Activated B cell treated with CpG ODN at 0.5 μM for 24 hours (primary cell): ENCODE measurements at regions of chr3 and their contacts with region 1.

Region 1: DNA sequence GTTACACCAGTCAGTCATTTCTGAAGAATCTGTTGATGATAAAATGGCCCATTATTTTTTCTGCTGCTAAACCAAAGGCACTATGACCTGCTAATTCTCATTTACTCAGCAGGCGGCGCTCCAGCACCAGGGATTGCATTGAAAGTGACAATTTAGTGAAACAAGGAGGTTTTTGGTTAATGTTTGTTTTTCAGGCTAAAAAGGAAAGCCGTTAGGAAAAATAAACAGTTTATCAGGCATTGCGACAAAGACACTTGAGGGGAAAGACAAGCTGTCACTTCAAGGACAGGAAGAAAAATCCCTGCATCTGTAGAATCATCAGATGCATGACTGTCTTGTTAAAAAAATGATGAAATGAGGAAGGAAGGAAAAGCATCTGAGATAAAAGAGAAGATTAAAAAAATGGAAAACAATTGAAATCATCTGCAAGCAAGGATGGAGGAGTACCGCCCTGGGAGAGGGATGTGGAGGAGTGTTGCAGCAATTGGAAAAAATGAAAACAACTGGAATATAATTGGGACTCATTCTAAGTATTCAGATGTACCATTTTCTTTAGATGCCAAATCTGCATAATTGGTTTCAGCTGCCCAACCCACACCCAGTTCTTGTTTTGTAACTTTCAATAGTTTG is 54.0 kb downstream of the NR1D2 start:
- DNase-seq: peak; percentile 41
- ATAC-seq: peak; percentile 52
- H3K4me3 Mint-ChIP-seq: peak overlapping the region; percentile 9
- H3K27ac Mint-ChIP-seq: no peak overlapping the region
- H3K4me1 Mint-ChIP-seq: peaks cover 6% of the 10 kb centered on the region
- H3K27me3 Mint-ChIP-seq: peaks cover 3% of the 10 kb centered on the region
- CTCF ChIP-seq: peak; percentile 57

Region 2: GRCh38 chr3:23932571-23932970 is 66.6 kb before region 1 on chr3:
- CTCF ChIA-PET with region 1: no interaction called
- POLR2A ChIA-PET with region 1: no interaction called
- intact Hi-C with region 1: no loop called
- DNase-seq: no peak
- ATAC-seq: no peak
- H3K4me3 Mint-ChIP-seq: no peak overlapping the region
- H3K27ac Mint-ChIP-seq: no peak overlapping the region
- H3K4me1 Mint-ChIP-seq: peaks cover 5% of the 10 kb centered on the region
- H3K27me3 Mint-ChIP-seq: peaks cover 8% of the 10 kb centered on the region
- CTCF ChIP-seq: no peak

Region 3: GRCh38 chr3:23945903-23946751 is 53.0 kb before region 1 on chr3:
- CTCF ChIA-PET with region 1: no interaction called
- POLR2A ChIA-PET with region 1: interaction called, 13 read pairs
- intact Hi-C with region 1: no loop called
- DNase-seq: peak; percentile 97
- ATAC-seq: peak; percentile 79
- H3K4me3 Mint-ChIP-seq: peak overlapping the region; percentile 86
- H3K27ac Mint-ChIP-seq: peak overlapping the region; percentile 94
- H3K4me1 Mint-ChIP-seq: peaks cover 44% of the 10 kb centered on the region
- H3K27me3 Mint-ChIP-seq: no peaks in the 10 kb centered on the region
- CTCF ChIP-seq: no peak

Region 4: GRCh38 chr3:24185738-24186384 is 186.7 kb after region 1 on chr3:
- CTCF ChIA-PET with region 1: no interaction called
- POLR2A ChIA-PET with region 1: no interaction called
- intact Hi-C with region 1: loop called (anchors 2 kb)
- DNase-seq: no peak
- ATAC-seq: peak; percentile 62
- H3K4me3 Mint-ChIP-seq: no peak overlapping the region
- H3K27ac Mint-ChIP-seq: no peak overlapping the region
- H3K4me1 Mint-ChIP-seq: no peaks in the 10 kb centered on the region
- H3K27me3 Mint-ChIP-seq: no peaks in the 10 kb centered on the region
- CTCF ChIP-seq: no peak

Region 5: GRCh38 chr3:24640330-24640877 is 641.3 kb after region 1 on chr3:
- CTCF ChIA-PET with region 1: no interaction called
- POLR2A ChIA-PET with region 1: no interaction called
- intact Hi-C with region 1: loop called (anchors 2 kb)
- DNase-seq: no peak
- ATAC-seq: no peak
- H3K4me3 Mint-ChIP-seq: no peak overlapping the region
- H3K27ac Mint-ChIP-seq: no peak overlapping the region
- H3K4me1 Mint-ChIP-seq: no peaks in the 10 kb centered on the region
- H3K27me3 Mint-ChIP-seq: peaks cover 9% of the 10 kb centered on the region
- CTCF ChIP-seq: no peak

Region 6: GRCh38 chr3:25033407-25034029 is 1034.4 kb after region 1 on chr3:
- CTCF ChIA-PET with region 1: no interaction called
- POLR2A ChIA-PET with region 1: no interaction called
- intact Hi-C with region 1: loop called (anchors 5 kb)
- DNase-seq: no peak
- ATAC-seq: no peak
- H3K4me3 Mint-ChIP-seq: no peak overlapping the region
- H3K27ac Mint-ChIP-seq: no peak overlapping the region
- H3K4me1 Mint-ChIP-seq: no peaks in the 10 kb centered on the region
- H3K27me3 Mint-ChIP-seq: no peaks in the 10 kb centered on the region
- CTCF ChIP-seq: no peak